BJ (cell line): ENCODE measurements at regions of chr20 and their contacts with region 1.

Region 1: DNA sequence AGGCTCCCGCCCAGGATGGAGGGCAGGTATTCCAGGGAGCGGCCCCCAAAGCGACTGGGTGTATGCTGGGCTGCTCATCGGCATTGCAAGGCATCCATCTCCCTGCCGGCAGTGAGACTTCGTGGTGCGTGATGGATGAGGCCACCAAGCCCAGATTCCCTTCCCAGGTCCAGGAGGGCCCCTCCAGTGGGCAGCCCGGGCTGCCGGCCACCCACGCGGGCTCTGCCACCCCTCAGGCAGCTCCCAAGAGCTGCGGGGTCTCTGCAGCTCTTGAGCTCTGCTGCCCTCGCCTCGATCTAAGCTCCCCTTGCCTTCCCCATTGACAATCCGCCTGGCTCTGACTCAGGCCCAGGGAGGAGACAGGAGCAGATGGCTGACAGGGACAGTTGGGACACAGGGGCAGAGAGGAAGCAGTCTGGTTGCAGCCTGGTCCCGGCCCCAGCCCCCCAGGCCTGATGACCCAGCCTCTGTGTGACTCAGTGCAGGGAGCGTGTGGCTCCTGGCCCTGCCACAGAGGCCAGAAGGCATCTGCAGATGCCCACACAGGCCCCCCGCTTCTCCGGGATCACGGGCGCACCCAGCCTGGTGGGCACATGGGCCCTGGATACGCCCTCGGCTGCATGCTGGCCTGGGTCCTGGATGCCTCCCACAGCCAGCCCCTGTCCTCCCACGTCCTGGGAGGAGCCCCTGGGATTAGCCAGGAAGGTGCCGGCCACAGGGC is 33.0 kb downstream of the SLCO4A1 start:
- DNase-seq: no peak
- H3K4me3 ChIP-seq: no peak overlapping the region
- H3K27me3 ChIP-seq: no peaks in the 10 kb centered on the region; the same call in 1 of the 2 replicates
- CTCF ChIP-seq: no peak

Region 2: DNA sequence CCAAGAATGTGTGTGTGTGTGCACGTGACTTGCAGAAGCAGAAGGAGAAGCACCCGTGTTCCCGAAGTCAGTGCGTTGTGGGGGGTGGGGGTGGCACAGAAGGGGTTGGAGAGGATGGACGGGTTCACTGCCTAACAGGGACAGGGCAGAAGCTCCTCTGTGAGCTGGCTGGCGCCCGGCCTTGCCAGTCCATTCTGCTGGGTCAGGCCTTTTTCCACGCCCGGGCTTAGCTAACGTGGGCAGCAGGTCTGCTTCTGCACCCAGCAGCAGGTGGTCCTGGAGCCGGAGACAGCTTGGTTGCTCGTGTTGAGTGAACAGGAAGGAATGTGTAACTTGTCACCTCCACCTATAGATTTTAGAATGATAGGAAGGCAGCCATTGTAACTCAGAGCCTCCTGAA is 1048.9 kb before region 1 on chr20:
- CTCF ChIA-PET with region 1: no interaction called
- POLR2A ChIA-PET with region 1: interaction called, 11 read pairs
- DNase-seq: no peak
- H3K4me3 ChIP-seq: no peak overlapping the region
- H3K27me3 ChIP-seq: no peaks in the 10 kb centered on the region
- CTCF ChIP-seq: no peak

Region 3: GRCh38 chr20:62694868-62695267 is 19.6 kb after region 1 on chr20:
- CTCF ChIA-PET with region 1: no interaction called
- POLR2A ChIA-PET with region 1: no interaction called
- DNase-seq: no peak
- H3K4me3 ChIP-seq: no peak overlapping the region
- H3K27me3 ChIP-seq: no peaks in the 10 kb centered on the region; the same call in 1 of the 2 replicates
- CTCF ChIP-seq: no peak